ENCODE measurements at regions of chr2 and their contacts with region 1.

Region 1: GRCh38 chr2:43226558-43226954 is at the start of gene ZFP36L2:
- DNase-seq: peak in 1 of 2 experiments; percentile 90
- H3K4me3 ChIP-seq: peak within 1 kb of the TSS; percentile 76 to 88 (median 85)
- H3K27ac ChIP-seq: peak within 1 kb of the TSS; percentile 95
- H3K4me1 ChIP-seq: peaks cover 5 to 16% (median 10%) of the 10 kb centered on the region in 4 experiments; a peak in 5 of 7 replicates
- H3K27me3 ChIP-seq: no peaks in the 10 kb centered on the region
- CTCF ChIP-seq: no peak
- EP300 ChIP-seq: no peak
- POLR2A ChIP-seq: peak in 1 of 2 experiments; percentile 86; a peak in 2 of 3 replicates
- RAD21 ChIP-seq: no peak
- total RNA-seq, gene ZFP36L2: 102 and 109 TPM in 2 replicates

Region 2: DNA sequence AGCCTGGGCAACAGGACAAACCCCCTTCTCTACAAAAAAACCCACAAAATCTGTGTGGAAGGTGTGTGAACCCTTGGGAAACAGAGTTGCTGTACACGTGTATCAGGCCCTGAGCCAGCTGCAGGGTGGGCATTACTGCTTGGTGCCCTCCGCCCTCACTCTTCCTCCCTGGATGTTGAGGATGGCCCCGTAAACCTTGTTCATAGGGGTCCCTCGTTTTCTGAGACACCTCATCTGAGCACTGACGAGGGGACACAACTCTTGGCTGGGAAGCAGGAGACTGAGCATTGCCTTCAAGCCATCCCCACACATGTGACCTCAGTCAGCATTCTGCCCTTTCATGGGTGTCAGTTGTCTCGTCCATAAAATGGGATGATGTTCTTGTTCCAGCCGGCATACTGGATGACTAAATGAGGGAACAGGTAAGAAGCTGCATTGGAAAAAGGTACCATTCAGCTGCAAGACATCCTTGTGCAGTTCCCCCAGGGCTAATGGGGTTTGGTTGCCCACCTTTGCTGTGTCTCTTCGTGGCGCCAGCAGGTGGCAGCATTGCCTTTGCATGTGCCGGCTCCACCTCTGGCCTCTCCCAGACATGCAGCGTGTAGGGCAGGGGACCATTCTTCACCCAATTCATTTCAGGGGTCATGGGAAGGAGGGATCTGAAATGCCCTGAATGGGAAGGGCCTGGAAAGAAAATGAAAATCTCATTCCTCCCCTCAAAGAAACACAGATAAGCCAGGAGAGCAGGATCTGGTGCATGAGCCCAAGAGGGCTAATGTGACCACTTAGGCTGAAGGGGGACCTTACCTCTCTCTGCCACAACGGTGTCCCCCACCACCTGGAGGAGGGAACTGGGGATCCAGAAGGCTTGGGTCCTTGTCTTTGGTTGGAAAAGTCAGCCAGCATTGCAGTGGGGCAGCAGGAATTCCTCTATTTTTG is 397.8 kb before region 1 on chr2:
- CTCF ChIA-PET with region 1: interaction called, 23 read pairs
- POLR2A ChIA-PET with region 1: no interaction called
- DNase-seq: peak; percentile 49 to 88
- H3K4me3 ChIP-seq: no peak overlapping the region
- H3K27ac ChIP-seq: no peak overlapping the region
- H3K4me1 ChIP-seq: no peaks in the 10 kb centered on the region; a peak in 2 of 7 replicates
- H3K27me3 ChIP-seq: peaks cover 0 to 9% (median 5%) of the 10 kb centered on the region in 4 experiments; a peak in 5 of 7 replicates
- CTCF ChIP-seq: peak; percentile 97 to 99 (median 98)
- EP300 ChIP-seq: no peak
- POLR2A ChIP-seq: no peak
- RAD21 ChIP-seq: peak; percentile 94 to 96

Region 3: GRCh38 chr2:42974721-42975717 is 251.5 kb before region 1 on chr2:
- CTCF ChIA-PET with region 1: interaction called, 13 read pairs
- POLR2A ChIA-PET with region 1: no interaction called
- DNase-seq: peak; percentile 56 to 96
- H3K4me3 ChIP-seq: peak overlapping the region in 3 of 4 experiments; percentile 18 to 51 (median 34); a peak in 5 of 8 replicates
- H3K27ac ChIP-seq: no peak overlapping the region
- H3K4me1 ChIP-seq: peaks cover 0 to 7% (median 4%) of the 10 kb centered on the region in 4 experiments; a peak in 4 of 7 replicates
- H3K27me3 ChIP-seq: no peaks in the 10 kb centered on the region; a peak in 1 of 7 replicates
- CTCF ChIP-seq: peak; percentile 85 to 91 (median 89)
- EP300 ChIP-seq: 0 out of 3 replicates have a peak, but pooled peaks of 1 of the 2 experiments have one; percentile 22
- POLR2A ChIP-seq: no peak
- RAD21 ChIP-seq: peak; percentile 88 to 92

Region 4: DNA sequence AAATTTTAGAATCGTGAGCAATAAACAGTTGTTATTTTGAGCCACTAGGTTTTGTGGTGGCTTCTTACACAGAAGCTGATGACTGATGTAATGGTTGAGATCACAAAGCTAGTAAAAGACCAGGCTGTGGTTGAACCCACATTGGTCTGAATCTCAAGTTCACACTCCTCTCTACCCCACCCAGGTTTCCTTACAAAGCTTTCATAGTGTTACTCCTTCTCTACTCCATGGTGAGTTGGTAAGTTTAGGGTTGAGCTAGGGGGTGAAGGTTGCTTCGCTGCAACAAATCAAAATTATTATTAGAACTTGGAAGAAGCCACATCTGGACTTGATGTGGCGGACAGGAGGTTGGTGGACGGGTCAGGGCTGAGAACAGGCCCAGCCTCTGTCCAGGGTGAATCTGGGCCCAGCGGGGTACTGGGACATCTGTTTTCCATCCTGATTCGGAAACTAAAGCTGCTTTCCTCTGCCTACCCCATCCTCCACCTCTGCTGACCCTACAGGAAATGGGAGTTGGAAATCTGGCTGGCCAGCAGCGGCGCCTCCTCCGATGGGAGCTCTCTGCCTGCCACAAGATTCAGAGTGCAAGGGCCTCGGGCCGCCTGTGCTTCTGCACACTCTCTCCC is 86.4 kb before region 1 on chr2:
- CTCF ChIA-PET with region 1: interaction called, 27 read pairs
- POLR2A ChIA-PET with region 1: interaction called, 6 read pairs
- DNase-seq: no peak
- H3K4me3 ChIP-seq: no peak overlapping the region
- H3K27ac ChIP-seq: no peak overlapping the region
- H3K4me1 ChIP-seq: peaks cover 0 to 18% (median 8%) of the 10 kb centered on the region in 4 experiments; a peak in 6 of 7 replicates
- H3K27me3 ChIP-seq: no peaks in the 10 kb centered on the region
- CTCF ChIP-seq: no peak
- EP300 ChIP-seq: no peak
- POLR2A ChIP-seq: no peak
- RAD21 ChIP-seq: no peak

Region 5: GRCh38 chr2:43178602-43179542 is 47.7 kb before region 1 on chr2:
- CTCF ChIA-PET with region 1: interaction called, 59 read pairs
- POLR2A ChIA-PET with region 1: interaction called, 52 read pairs
- DNase-seq: peak; percentile 63 to 70
- H3K4me3 ChIP-seq: peak overlapping the region in 2 of 4 experiments; percentile 19 to 35; a peak in 4 of 8 replicates
- H3K27ac ChIP-seq: peak overlapping the region; percentile 80
- H3K4me1 ChIP-seq: peaks cover 13 to 32% (median 27%) of the 10 kb centered on the region in 4 experiments
- H3K27me3 ChIP-seq: no peaks in the 10 kb centered on the region
- CTCF ChIP-seq: no peak
- EP300 ChIP-seq: no peak
- POLR2A ChIP-seq: peak in 1 of 2 experiments; percentile 65; a peak in 1 of 3 replicates
- RAD21 ChIP-seq: no peak

Region 6: GRCh38 chr2:43239981-43240761 is 13.6 kb after region 1 on chr2:
- CTCF ChIA-PET with region 1: interaction called, 91 read pairs
- POLR2A ChIA-PET with region 1: interaction called, 7 read pairs
- DNase-seq: no peak
- H3K4me3 ChIP-seq: no peak overlapping the region
- H3K27ac ChIP-seq: no peak overlapping the region
- H3K4me1 ChIP-seq: no peaks in the 10 kb centered on the region; a peak in 1 of 7 replicates
- H3K27me3 ChIP-seq: no peaks in the 10 kb centered on the region
- CTCF ChIP-seq: peak; percentile 26 to 56 (median 54)
- EP300 ChIP-seq: no peak
- POLR2A ChIP-seq: no peak
- RAD21 ChIP-seq: peak; percentile 48 to 68

Measured in H1 (cell line).